Esophagus muscularis mucosa (tissue), 4 donors: ENCODE measurements at regions of chr14 and their contacts with region 1.

Region 1: DNA sequence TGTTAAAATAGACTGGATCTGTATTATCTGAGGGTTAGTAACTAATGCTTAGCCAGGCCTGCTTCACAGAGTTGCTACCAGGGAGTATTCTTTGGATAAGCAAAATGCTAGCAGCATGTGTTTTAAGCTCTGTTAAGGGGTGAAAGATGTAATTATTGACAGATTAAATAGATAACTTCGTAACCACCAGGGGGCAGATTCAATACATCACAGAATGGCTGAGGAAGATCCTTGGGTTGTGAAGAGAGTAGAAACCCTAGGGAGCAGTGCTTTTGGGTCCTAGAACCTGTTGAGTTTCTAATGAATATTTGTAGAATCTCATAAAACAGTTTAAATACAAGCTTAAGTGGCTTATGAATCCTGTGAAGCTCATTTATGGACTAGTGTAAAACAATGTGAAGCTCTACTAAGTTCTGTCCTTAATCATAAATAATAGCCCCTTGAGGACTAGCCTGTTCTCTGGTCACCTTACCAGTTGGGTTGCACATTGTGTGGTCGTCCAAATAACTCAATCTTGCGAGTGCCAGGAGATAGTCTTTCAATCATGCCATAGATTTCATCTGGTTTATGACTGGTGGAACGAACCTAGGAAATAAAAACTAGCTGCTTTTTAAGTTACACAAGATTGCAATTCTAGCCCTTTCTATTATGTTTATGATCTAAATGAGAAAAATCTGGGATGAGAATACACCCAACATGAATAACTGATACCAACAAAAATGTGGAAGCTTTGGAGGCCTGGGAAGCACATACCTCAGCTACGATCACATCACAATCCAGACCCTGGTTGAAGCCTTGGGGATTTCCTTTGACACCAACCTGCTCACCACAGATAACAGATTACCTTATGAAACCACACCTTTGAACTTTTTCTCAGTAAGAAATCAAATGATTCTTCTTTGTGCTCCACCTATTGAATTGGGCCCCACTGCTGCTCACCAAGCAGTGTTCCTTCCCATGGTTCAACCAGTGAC is 12.3 kb downstream of the METTL3 start:
- DNase-seq: no peak
- H3K4me3 ChIP-seq: no peak overlapping the region
- H3K27ac ChIP-seq: peak overlapping the region in 1 of 4 donors; percentile 40
- H3K4me1 ChIP-seq: peaks cover 0 to 10% (median 0%) of the 10 kb centered on the region in 4 donors
- H3K27me3 ChIP-seq: no peaks in the 10 kb centered on the region
- CTCF ChIP-seq: peak; percentile 36 to 49 (median 48)
- EP300 ChIP-seq: no peak
- POLR2A ChIP-seq: no peak

Region 2: GRCh38 chr14:21557084-21557901 is 58.5 kb after region 1 on chr14:
- intact Hi-C with region 1: loop called (anchors 1 kb)
- DNase-seq: peak; percentile 95
- H3K4me3 ChIP-seq: peak overlapping the region; percentile 37 to 48 (median 41)
- H3K27ac ChIP-seq: peak overlapping the region; percentile 70 to 77 (median 74)
- H3K4me1 ChIP-seq: peaks cover 0 to 19% (median 15%) of the 10 kb centered on the region in 4 donors
- H3K27me3 ChIP-seq: no peaks in the 10 kb centered on the region
- CTCF ChIP-seq: peak; percentile 65 to 79 (median 65)
- EP300 ChIP-seq: no peak
- POLR2A ChIP-seq: no peak

Region 3: GRCh38 chr14:21612324-21612723 is 113.5 kb after region 1 on chr14:
- intact Hi-C with region 1: no loop called
- DNase-seq: no peak
- H3K4me3 ChIP-seq: no peak overlapping the region
- H3K27ac ChIP-seq: no peak overlapping the region
- H3K4me1 ChIP-seq: no peaks in the 10 kb centered on the region
- H3K27me3 ChIP-seq: no peaks in the 10 kb centered on the region
- CTCF ChIP-seq: no peak
- EP300 ChIP-seq: no peak
- POLR2A ChIP-seq: no peak